PC-9 (cell line): ENCODE measurements at regions of chr12 and their contacts with region 1.

Region 1: DNA sequence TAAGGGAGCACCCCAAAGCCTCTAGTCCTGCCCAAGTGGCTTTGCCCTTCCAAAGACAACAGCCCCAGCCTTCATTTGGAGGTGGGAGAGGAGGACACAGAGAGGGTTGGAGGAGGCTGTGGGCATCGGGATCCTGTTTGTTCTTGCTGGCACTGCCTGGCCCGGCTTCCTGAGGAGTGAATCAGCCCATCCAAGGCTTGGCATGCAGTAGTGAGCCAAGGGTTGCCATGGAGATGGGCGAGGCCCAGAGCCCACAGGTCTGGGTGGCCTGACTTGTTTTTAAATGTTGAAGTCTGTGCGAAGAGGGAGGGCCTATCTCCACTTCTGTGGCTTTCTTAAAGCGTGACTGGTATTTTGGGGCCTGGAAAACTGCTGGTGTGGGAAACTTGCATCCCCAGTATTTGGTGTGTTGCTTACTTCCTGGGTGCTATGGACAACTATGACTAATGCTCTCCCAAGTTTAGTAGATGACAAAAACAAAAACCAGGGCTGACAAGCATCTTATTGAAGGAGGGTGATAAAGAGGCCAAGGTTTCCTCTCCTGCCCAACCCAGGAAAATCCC is 15.8 kb downstream of the CD9 start:
- DNase-seq: peak; percentile 99 to 100
- H3K4me3 ChIP-seq: peak overlapping the region; percentile 32; the same call in 1 of the 2 replicates
- H3K27ac ChIP-seq: peak overlapping the region; percentile 95
- H3K4me1 ChIP-seq: peaks cover 86% of the 10 kb centered on the region
- H3K27me3 ChIP-seq: no peaks in the 10 kb centered on the region
- CTCF ChIP-seq: no peak

Region 2: DNA sequence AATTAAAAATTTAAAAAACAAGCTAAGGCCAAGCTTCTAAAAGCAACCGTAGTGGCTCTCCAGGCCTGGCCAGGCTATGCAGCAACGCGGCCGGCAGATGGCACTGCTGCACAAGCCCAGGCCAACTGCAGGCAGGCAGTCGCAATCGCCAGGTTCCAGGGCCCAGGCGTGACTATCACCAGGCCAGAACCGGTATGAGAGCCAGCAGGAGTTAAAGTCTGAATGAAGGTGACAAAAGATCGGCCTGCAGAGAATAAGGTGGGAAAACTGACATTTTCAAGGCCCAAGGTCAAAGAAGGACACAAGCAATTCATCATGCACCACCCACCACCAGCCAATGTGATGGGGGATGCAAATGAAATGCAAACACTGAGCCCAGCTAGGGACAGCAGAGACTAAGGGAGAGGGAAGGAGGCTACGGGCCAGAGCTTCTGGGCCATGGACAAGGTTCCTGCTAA is 227.3 kb before region 1 on chr12:
- CTCF ChIA-PET with region 1: no interaction called
- POLR2A ChIA-PET with region 1: no interaction called
- intact Hi-C with region 1: no loop called
- DNase-seq: peak; percentile 50 to 86
- H3K4me3 ChIP-seq: no peak overlapping the region
- H3K27ac ChIP-seq: no peak overlapping the region
- H3K4me1 ChIP-seq: no peaks in the 10 kb centered on the region
- H3K27me3 ChIP-seq: peaks cover 35% of the 10 kb centered on the region
- CTCF ChIP-seq: peak; percentile 99

Region 3: DNA sequence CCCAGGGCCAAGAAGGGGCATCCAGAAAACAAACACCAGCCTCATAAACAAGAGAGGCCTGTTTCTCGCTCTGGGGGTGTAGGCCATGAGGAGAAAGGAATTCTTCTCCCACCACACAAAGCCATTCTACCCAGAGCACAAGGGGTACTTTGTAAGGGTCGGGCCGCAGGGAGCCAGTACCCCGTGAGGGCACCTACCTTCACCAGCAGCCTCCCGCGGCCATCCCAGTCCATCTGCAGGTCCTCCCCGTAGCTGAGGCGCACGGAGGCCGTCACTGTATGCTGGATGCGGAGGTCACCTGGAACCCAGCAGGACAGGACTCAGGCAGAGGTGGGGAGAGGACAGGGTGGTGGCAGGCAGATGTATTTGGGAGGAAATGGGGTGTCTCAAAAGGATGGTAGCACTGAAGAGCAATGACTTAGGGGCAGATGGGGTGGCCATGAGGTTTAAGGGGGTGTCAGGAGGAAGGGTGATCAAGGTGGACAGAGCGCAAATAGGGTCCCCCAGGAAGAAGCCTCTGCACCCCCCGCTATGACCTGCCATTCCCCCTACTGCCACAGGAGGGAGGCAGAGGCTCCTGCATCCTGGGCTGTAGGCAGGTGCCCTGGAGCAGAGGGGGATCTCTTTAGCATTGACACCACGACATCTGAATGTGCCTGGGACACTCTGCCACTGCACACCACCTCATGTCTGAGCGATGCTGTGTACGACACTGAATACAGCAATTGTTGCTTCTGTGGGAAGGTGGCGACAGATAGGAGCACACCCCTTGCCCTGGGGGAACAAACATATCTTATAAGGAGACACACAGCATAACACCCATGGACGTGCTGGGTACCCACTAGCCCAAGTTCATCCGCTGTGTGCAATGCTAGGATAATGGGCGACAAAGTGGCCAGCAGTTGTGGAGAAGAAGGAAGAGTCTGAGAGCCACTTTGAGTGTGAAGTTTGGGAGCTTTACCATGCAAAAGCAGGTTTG is 153.0 kb before region 1 on chr12:
- CTCF ChIA-PET with region 1: interaction called, 4 read pairs
- POLR2A ChIA-PET with region 1: no interaction called
- intact Hi-C with region 1: loop called (anchors 1 kb)
- DNase-seq: peak; percentile 48 to 80
- H3K4me3 ChIP-seq: no peak overlapping the region
- H3K27ac ChIP-seq: no peak overlapping the region
- H3K4me1 ChIP-seq: peaks cover 34% of the 10 kb centered on the region
- H3K27me3 ChIP-seq: no peaks in the 10 kb centered on the region
- CTCF ChIP-seq: peak; percentile 98

Region 4: DNA sequence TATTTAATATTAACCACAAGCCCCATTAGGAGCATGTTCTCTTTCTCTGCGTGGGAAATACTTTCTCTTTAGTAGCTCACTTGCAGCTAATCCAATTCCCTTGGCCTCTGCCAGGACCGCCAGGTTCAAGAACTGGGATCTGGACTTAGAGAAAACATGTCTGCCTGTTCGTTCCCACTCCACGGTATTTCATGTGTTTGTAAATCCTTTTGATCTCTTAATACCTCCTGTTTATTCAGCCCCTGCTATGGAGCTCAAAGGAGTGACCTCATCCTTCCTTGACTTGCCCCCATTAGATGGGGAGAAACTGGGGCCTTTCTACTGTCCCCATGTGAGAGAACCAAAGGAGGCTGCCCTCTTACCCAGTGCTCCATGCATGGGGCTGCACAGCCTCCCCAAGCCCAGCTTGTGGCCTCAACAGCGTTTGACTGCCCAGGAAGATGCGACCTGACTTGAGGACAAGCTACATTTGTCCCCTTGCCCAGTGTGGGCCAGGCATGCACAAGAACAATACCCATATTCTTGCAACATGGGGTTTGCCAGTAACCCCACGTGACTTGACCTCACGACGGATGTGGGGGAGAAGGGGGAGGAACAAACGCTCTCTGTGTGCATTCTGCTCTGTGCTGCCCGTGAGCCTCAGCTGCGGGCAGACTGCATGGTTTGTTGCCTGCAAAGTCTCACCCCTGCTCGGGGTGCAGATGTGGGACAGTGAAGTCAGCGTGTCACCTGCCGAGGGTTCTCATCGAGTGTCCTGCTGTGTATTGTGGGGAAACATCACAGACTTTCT is 14.5 kb after region 1 on chr12:
- CTCF ChIA-PET with region 1: interaction called, 23 read pairs
- POLR2A ChIA-PET with region 1: interaction called, 6 read pairs
- intact Hi-C with region 1: loop called (anchors 1 kb)
- DNase-seq: no peak
- H3K4me3 ChIP-seq: no peak overlapping the region
- H3K27ac ChIP-seq: peak overlapping the region; percentile 86
- H3K4me1 ChIP-seq: peaks cover 81% of the 10 kb centered on the region
- H3K27me3 ChIP-seq: no peaks in the 10 kb centered on the region
- CTCF ChIP-seq: no peak

Region 5: DNA sequence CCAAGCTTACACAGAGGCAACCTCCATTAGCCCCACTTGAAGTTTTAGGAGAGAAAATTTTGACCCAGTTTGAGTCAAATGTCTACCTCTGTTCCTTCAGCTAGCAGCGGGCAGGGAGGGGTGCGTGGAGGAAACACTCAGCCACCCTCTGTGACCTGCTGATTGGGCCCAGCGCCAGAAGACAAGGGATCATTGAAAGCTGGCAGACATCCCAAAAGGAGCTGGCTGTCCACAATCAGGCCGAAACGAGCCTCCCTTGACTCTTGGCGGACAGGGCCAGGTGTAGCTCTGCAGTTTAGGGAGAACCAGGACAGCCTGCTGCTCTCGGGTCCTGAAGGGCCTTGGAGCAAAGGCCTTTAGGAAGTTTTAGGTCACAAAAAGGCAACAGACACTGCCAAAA is 25.5 kb after region 1 on chr12:
- CTCF ChIA-PET with region 1: no interaction called
- POLR2A ChIA-PET with region 1: no interaction called
- intact Hi-C with region 1: no loop called
- DNase-seq: peak in 1 of 2 experiments; percentile 62
- H3K4me3 ChIP-seq: no peak overlapping the region
- H3K27ac ChIP-seq: no peak overlapping the region
- H3K4me1 ChIP-seq: peaks cover 10% of the 10 kb centered on the region; the same call in 1 of the 2 replicates
- H3K27me3 ChIP-seq: no peaks in the 10 kb centered on the region
- CTCF ChIP-seq: no peak

Region 6: GRCh38 chr12:6285063-6285477 is 69.1 kb after region 1 on chr12:
- CTCF ChIA-PET with region 1: interaction called, 13 read pairs
- POLR2A ChIA-PET with region 1: interaction called, 8 read pairs
- intact Hi-C with region 1: no loop called
- DNase-seq: peak; percentile 48 to 79
- H3K4me3 ChIP-seq: no peak overlapping the region
- H3K27ac ChIP-seq: no peak overlapping the region
- H3K4me1 ChIP-seq: peaks cover 40% of the 10 kb centered on the region
- H3K27me3 ChIP-seq: no peaks in the 10 kb centered on the region
- CTCF ChIP-seq: peak; percentile 99

Region 7: DNA sequence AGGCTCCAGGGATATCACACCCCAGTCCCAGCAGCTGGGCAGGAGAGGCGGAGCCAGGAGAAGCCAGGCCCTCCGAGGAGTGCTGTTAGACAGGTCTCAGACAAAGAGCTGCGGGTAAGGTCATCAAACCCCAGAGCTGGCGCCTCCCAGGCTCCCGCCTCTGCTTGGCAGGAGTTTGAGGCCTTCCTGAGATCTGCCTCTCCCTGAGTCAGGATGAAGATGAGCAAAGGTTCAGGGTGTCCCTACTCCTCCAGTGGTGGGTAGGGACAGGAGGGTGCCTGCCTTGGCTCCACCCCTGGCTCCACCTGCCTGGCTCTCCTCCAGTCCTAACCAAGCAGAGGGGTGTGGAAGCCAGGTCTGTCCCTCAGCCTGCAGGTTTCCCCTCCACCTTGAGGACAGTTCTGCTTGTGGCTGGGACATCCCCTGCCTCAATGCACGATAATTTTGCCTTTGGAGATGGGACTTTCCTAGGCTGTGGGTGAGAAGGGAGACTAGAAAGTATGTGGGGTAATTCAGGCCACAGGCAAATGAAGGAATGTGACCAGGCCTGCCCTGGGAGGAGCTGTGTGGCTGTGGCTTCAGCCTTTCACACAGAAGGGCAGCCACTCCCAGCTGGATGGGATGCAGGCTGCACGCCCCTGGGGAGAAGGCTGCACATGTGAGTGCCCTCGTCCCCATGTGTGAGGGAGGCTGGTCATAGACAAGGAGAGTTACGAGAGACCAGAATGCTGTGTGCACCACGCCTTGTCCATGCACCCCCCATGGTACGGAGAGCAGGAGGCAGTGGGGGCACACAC is 96.7 kb after region 1 on chr12:
- CTCF ChIA-PET with region 1: no interaction called
- POLR2A ChIA-PET with region 1: interaction called, 7 read pairs
- intact Hi-C with region 1: loop called (anchors 1 kb)
- DNase-seq: peak; percentile 96
- H3K4me3 ChIP-seq: peak overlapping the region; percentile 33; the same call in 1 of the 2 replicates
- H3K27ac ChIP-seq: peak overlapping the region; percentile 97
- H3K4me1 ChIP-seq: peaks cover 54% of the 10 kb centered on the region
- H3K27me3 ChIP-seq: no peaks in the 10 kb centered on the region
- CTCF ChIP-seq: no peak

Region 8: GRCh38 chr12:6363611-6364328 is 147.8 kb after region 1 on chr12:
- CTCF ChIA-PET with region 1: no interaction called
- POLR2A ChIA-PET with region 1: interaction called, 21 read pairs
- intact Hi-C with region 1: loop called (anchors 2 kb)
- DNase-seq: peak; percentile 70 to 82
- H3K4me3 ChIP-seq: peak overlapping the region; percentile 64
- H3K27ac ChIP-seq: peak overlapping the region; percentile 86
- H3K4me1 ChIP-seq: peaks cover 69% of the 10 kb centered on the region
- H3K27me3 ChIP-seq: no peaks in the 10 kb centered on the region
- CTCF ChIP-seq: no peak; the same call in 1 of the 2 replicates

Region 9: GRCh38 chr12:6489449-6489848 is 273.4 kb after region 1 on chr12:
- CTCF ChIA-PET with region 1: no interaction called
- POLR2A ChIA-PET with region 1: no interaction called
- intact Hi-C with region 1: no loop called
- DNase-seq: no peak
- H3K4me3 ChIP-seq: no peak overlapping the region
- H3K27ac ChIP-seq: no peak overlapping the region
- H3K4me1 ChIP-seq: peaks cover 9% of the 10 kb centered on the region; the same call in 1 of the 2 replicates
- H3K27me3 ChIP-seq: no peaks in the 10 kb centered on the region
- CTCF ChIP-seq: no peak

Region 10: DNA sequence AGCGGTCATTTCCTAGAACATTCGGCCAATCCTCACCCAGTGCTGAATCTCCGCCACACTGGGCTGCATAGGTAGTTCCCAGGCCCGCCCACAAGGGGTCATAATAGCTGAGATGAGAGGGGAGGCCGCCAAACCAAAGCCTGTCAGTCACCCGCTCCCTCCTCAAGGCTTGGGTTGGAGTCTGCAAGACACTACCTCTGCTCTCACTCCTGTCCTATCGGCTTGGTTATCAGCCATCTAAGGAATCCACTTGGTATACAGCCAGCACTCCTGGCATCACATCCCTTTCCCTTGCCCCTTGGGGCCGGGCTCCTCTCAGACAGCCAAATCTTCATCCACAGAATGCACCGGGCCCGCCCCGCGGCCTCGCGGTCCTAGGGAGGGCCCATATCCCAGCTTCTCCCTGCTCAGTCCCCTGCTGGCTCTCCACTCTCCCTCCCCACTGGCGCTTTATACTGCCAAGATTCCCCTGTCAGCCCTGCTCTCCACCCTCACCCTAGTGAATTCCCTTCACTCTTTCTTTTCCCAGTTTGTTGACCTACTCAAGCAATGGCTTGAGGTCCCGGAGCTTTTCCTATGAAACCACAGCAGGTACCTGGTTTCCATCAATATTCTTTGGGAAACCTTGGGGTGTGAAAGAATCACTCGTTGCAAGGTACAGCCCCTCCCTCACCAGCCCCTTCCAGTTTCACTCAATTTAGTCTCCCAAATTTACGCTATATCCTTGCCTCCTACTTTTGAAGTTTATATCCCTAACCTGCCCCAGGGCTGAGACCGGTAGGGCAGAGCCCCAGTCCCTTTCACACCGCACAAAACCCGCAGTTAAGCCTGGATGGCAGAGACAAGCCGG is 338.4 kb after region 1 on chr12:
- CTCF ChIA-PET with region 1: interaction called, 15 read pairs
- POLR2A ChIA-PET with region 1: no interaction called
- intact Hi-C with region 1: no loop called
- DNase-seq: peak in 1 of 2 experiments; percentile 65
- H3K4me3 ChIP-seq: no peak overlapping the region
- H3K27ac ChIP-seq: no peak overlapping the region
- H3K4me1 ChIP-seq: no peaks in the 10 kb centered on the region
- H3K27me3 ChIP-seq: no peaks in the 10 kb centered on the region
- CTCF ChIP-seq: peak; percentile 62